ENCODE measurements at regions of chr15 and their contacts with region 1.

Region 1: DNA sequence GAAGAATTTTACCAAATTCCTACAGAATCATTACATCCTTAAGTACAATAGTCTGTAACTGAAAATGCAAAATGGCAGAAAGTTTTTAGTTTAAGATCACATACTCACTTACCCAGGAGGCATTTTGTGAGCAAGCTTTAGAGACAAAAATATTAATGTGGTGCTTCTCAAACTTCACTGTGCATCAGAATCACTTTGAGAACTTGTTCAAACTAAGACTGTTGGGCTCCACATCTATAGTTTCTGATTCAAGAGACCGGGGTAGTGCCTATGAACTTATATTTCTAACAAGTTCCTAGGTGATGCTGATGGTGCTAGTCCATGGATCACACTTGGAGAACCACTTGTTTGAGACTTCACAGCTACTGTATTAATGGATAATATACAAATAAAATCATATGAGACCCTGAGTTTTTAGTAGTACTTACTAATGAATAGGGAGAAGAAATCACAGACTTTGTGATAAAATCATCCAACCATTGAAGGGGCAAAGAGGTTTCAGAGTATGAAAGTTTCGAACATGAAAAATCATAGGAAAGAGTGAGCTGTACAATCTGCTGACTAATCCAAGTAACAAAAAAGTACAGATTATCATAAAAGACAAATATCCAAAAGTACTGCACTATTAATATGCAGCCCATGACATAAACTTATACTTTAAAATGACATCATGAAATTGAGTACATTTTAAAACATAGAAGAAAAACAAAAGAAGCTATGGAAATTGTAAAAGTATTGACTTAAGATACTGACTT is 110.3 kb downstream of the ADAM10 start:
- DNase-seq: no peak
- ATAC-seq: no peak
- H3K4me3 Mint-ChIP-seq: no peak overlapping the region
- H3K27ac Mint-ChIP-seq: peak overlapping the region in 7 of 10 donors; percentile 23 to 80 (median 75)
- H3K4me1 Mint-ChIP-seq: peaks cover 0 to 9% (median 4%) of the 10 kb centered on the region in 4 donors
- H3K27me3 Mint-ChIP-seq: no peaks in the 10 kb centered on the region

Region 2: DNA sequence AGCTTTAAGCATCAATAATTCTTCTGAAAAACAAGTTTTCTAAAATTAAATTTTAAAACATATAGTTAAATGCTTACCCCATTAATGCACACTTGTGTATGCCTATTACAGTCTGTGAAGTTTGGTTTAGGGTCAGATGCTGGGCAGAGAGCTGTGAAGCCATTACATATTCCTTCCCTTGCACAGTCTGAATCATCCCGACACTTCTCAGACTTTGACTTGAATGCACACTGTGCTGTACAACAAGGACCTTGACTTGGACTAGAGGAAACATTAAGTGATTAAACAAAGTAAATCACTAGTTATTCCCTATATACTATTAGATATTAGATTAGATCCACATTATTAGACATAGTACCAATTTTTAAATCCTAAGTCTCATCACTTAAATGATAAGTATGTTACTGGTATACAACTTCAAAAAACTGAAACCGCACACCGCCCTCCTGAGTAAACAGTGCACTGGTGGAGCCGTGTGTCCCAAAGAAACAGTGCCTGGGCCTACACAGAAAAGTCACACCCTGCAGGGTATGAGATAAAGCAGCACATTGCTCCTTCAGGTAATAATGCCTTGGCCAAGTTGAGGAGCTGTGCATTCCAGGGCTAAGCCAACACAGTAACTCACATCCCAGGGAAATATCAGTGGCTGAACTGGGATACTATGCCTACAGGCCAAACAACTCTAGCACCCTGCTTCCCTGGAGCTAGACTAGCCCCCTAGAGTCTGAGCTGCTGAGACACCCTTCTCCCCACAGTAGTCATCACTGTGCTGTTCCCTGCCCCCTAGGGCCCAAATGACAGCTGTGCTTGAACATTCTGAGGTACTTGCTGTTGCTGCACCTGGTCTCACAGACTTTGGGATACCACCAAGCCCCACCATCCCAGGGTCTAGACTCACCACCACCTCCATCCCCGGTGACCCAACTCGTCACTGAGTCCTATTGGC is 27.2 kb before region 1 on chr15:
- POLR2A ChIA-PET with region 1: no interaction called
- DNase-seq: no peak
- ATAC-seq: no peak
- H3K4me3 Mint-ChIP-seq: no peak overlapping the region
- H3K27ac Mint-ChIP-seq: peak overlapping the region in 2 of 10 donors; percentile 56 to 64
- H3K4me1 Mint-ChIP-seq: peaks cover 19 to 48% (median 20%) of the 10 kb centered on the region in 4 donors
- H3K27me3 Mint-ChIP-seq: no peaks in the 10 kb centered on the region

Region 3: DNA sequence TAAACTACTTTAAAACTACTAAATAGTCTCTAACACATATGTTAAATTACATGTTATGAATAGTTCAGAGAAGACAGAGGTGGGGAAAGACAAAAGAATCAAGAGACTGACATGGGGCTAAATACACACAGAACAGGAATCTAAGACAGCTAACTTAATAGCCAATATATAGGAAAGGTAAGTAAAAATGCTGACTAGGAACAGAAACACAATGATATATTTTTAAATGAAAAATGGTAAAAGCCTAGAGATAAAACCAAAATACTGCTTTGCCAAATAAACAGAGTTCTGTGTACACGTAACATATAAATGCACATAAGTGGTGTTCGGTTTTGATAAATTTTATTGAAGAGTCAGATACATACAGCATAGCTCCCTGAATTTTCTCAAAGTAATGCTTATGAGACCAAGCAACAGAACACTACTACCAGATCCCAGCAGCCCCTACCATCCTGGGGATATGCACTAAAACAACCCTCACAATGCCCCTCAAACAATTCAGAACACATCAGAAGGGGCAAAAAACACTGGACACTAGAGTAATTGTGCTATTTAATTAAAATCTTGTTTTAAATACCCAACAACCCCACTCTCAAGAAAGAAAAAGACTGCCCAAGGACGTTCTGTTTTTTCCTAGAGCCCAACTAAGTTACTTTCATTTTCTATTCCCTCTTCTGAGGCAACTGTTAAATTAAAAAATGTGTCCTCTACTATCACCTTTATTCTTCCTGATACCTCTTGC is 10.8 kb before region 1 on chr15:
- POLR2A ChIA-PET with region 1: interaction called, 12 read pairs
- DNase-seq: peak in 3 of 10 donors; percentile 26 to 34 (median 33)
- ATAC-seq: peak; percentile 68 to 76
- H3K4me3 Mint-ChIP-seq: peak overlapping the region; percentile 80 to 87 (median 86)
- H3K27ac Mint-ChIP-seq: peak overlapping the region; percentile 91 to 99 (median 96)
- H3K4me1 Mint-ChIP-seq: peaks cover 9 to 63% (median 47%) of the 10 kb centered on the region in 4 donors
- H3K27me3 Mint-ChIP-seq: no peaks in the 10 kb centered on the region

Region 4: DNA sequence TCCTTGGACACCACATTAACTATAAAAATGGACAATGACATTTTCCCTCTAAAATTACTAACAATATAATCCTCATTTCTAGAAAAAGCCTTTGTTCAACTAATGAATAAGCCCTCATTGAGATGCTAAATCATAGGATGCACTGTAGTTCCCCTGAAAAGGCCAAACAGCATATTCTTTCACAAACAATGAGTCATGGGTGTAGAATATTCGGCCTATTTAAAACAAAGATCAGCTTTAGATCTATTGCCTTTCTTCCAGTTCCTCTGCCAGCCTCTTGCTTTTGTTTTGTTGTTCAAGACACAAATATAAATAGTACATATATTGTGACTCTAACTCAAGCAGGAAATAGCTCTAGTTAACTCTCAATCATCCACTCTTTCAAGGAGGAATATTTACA is 27.8 kb after region 1 on chr15:
- POLR2A ChIA-PET with region 1: no interaction called
- DNase-seq: no peak
- ATAC-seq: no peak
- H3K4me3 Mint-ChIP-seq: no peak overlapping the region
- H3K27ac Mint-ChIP-seq: peak overlapping the region in 1 of 10 donors; percentile 17
- H3K4me1 Mint-ChIP-seq: peaks cover 3 to 9% (median 5%) of the 10 kb centered on the region in 4 donors
- H3K27me3 Mint-ChIP-seq: no peaks in the 10 kb centered on the region

Region 5: DNA sequence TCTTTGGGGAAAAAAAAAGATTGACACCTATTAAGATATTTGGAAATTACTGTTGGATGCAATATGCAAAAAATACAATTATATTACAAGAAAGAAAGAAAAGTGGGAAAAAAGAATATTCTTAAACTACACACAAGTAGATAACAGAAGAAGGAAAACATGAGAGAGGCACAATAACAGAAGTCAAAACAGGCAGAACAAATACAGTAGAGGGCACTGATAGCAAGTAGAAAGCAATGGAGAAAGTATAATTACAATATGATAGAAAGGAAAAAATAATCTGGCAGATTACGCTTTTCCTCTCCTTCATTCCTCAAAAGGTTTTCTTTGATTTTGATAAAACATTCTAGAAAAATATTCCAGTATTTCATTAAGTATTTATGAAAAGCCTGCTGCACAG is 38.2 kb after region 1 on chr15:
- POLR2A ChIA-PET with region 1: no interaction called
- DNase-seq: no peak
- ATAC-seq: no peak
- H3K4me3 Mint-ChIP-seq: no peak overlapping the region
- H3K27ac Mint-ChIP-seq: peak overlapping the region in 3 of 10 donors; percentile 8 to 46 (median 19)
- H3K4me1 Mint-ChIP-seq: peaks cover 12 to 22% (median 16%) of the 10 kb centered on the region in 4 donors
- H3K27me3 Mint-ChIP-seq: no peaks in the 10 kb centered on the region

Region 6: GRCh38 chr15:58770519-58770856 is 131.3 kb after region 1 on chr15:
- POLR2A ChIA-PET with region 1: no interaction called
- DNase-seq: peak in 3 of 10 donors; percentile 6 to 27 (median 14)
- ATAC-seq: peak; percentile 40 to 46
- H3K4me3 Mint-ChIP-seq: peak overlapping the region in 1 of 10 donors; percentile 90
- H3K27ac Mint-ChIP-seq: peak overlapping the region; percentile 87 to 97 (median 96)
- H3K4me1 Mint-ChIP-seq: peaks cover 6 to 20% (median 13%) of the 10 kb centered on the region in 4 donors
- H3K27me3 Mint-ChIP-seq: no peaks in the 10 kb centered on the region

Measured in naive thymus-derived CD8-positive, alpha-beta T cell (primary cell).